Left cardiac atrium (tissue), 4 donors: ENCODE measurements at regions of chr2 and their contacts with region 1.

Region 1: GRCh38 chr2:64453770-64454385 is at the start of gene LGALSL:
- DNase-seq: peak; percentile 82
- ATAC-seq: peak; percentile 88 to 94
- total RNA-seq, gene LGALSL: 13.1 to 18.0 TPM

Region 2: GRCh38 chr2:64404002-64404731 is 49.7 kb before region 1 on chr2:
- intact Hi-C with region 1: loop called in 1 of 2 experiments (anchors 5 kb)
- DNase-seq: peak; percentile 91
- ATAC-seq: peak; percentile 87 to 92

Region 3: DNA sequence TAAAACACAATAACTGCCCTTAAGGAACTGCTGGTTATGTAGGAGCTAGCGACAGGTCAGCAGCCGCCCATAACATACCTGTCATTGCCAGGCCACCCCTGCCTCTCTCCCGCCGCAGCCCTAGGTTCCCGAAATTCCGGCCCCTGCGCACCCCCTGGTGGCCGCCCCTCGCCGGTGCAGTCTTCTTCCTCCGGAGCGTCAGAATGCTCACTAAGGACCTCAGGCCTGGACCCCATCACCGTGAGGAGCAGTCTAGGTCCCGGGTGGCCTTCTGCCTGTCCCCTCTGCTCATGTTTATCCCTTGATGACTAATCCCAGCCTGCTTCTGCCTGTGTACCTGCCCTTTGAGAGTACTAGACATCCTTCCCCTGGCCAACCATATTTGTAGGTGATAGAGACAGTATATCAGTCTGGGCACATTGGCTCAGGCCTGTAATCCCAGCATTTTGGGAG is 419.6 kb after region 1 on chr2:
- intact Hi-C with region 1: no loop called
- DNase-seq: peak; percentile 76
- ATAC-seq: peak; percentile 79 to 85